ENCODE measurements at regions of chr9 and their contacts with region 1.

Region 1: DNA sequence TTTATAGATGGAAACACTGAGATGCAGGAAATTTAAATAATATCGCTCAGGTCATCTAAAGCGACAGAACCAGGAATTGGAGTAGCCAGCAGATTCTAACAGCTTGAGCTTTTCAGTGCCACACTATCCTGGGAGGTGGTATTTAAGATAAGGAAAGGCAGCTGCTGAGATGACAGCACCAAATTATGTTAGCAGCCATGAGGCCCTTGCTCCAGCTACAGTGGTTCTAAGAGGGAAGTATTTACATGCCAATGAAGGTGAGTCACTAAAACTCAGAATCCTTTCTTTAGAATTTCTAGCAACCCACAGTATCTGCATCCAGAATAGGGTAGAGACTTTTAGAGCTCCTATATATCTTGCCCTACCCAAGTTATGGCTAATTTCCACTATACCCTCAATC is 127.0 kb upstream of the VLDLR start:
- DNase-seq: peak; percentile 88
- ATAC-seq: peak; percentile 94
- H3K4me3 ChIP-seq: no peak overlapping the region
- H3K27ac ChIP-seq: peak overlapping the region; percentile 76; the same call in 1 of the 2 replicates
- H3K4me1 ChIP-seq: peaks cover 12% of the 10 kb centered on the region
- H3K27me3 ChIP-seq: no peaks in the 10 kb centered on the region
- CTCF ChIP-seq: no peak
- POLR2A ChIP-seq: no peak
- RAD21 ChIP-seq: 0 out of 2 replicates have a peak, but pooled peaks have one; percentile 11

Region 2: DNA sequence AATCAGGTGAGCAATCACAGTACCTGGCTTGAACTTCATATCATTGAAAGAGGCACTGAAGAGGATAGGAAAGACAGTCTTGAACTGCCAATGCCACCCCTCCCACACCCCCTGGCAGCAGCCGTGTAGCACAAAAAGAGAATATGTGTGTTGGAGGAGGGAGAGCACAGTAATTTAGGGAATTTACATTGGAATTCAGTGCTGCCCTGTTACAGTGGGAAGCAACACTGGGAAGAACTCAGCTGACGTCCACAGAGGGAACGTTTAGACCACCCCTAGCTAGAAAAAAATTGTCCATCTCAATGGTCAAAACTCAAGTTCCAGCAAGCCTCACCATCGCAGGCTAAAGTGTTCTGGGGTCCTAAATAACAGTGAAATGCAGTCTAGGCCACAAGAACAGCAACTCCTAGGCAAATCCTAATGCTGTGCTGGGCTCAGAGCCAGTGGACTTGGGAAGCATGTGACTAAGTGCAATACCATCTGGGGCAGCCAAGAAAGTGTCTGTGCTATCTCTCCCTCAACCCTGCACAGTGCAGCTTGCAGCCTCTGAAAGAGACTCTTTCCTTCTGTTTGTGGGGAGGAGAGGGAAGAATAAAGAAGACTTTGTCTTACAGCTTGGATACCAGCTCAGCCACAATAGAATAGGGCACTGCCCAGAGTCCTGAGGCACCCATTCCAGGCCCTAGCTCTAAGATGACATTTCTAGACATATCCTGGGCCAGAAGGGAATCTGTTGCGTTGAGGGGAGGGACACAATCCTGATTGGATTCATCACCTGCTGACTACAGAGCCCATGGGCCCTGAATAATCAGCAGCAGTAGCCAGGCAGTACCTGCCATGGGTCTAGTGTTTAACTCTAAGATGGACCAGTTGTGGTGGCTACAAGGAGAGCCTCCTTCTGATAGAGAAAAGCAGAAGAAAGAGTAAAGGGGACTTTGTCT is 64.9 kb after region 1 on chr9:
- CTCF ChIA-PET with region 1: no interaction called
- POLR2A ChIA-PET with region 1: no interaction called
- dilution Hi-C with region 1: no loop called
- in situ Hi-C with region 1: no loop called
- intact Hi-C with region 1: loop called (anchors 5 kb)
- DNase-seq: peak; percentile 95
- ATAC-seq: peak; percentile 98
- H3K4me3 ChIP-seq: no peak overlapping the region
- H3K27ac ChIP-seq: peak overlapping the region; percentile 93
- H3K4me1 ChIP-seq: peaks cover 12% of the 10 kb centered on the region
- H3K27me3 ChIP-seq: no peaks in the 10 kb centered on the region
- CTCF ChIP-seq: no peak
- POLR2A ChIP-seq: no peak
- RAD21 ChIP-seq: no peak